Gastrocnemius medialis (tissue), 4 donors: ENCODE measurements at regions of chr1 and their contacts with region 1.

Region 1: GRCh38 chr1:182317611-182318161 is 73.9 kb downstream of the GLUL start:
- DNase-seq: no peak
- ATAC-seq: peak in 1 of 2 donors; percentile 40
- H3K4me3 ChIP-seq: no peak overlapping the region
- H3K27ac ChIP-seq: peak overlapping the region; percentile 52 to 71 (median 64)
- H3K4me1 ChIP-seq: peaks cover 9 to 13% of the 10 kb centered on the region in 2 donors
- H3K27me3 ChIP-seq: no peaks in the 10 kb centered on the region
- CTCF ChIP-seq: no peak
- POLR2A ChIP-seq: no peak

Region 2: GRCh38 chr1:182397771-182398393 is 80.2 kb after region 1 on chr1:
- in situ Hi-C with region 1: no loop called
- intact Hi-C with region 1: loop called (anchors 5 kb)
- DNase-seq: peak in 1 of 2 donors; percentile 58
- ATAC-seq: peak; percentile 34 to 66
- H3K4me3 ChIP-seq: no peak overlapping the region
- H3K27ac ChIP-seq: peak overlapping the region; percentile 57 to 73 (median 72)
- H3K4me1 ChIP-seq: peaks cover 21 to 25% of the 10 kb centered on the region in 2 donors
- H3K27me3 ChIP-seq: no peaks in the 10 kb centered on the region
- CTCF ChIP-seq: no peak
- POLR2A ChIP-seq: no peak